Activated CD8-positive, alpha-beta T cell treated with anti-CD3 and anti-CD28 coated beads, Interleukin-2, amount 10 ng/mL, durations not matched to agents 7 days and 5 days (primary cell): ENCODE measurements at regions of chr7 and their contacts with region 1.

Region 1: GRCh38 chr7:92447345-92448204 is at the start of gene GATAD1:
- DNase-seq: peak; percentile 90
- ATAC-seq: peak; percentile 79
- H3K4me3 Mint-ChIP-seq: peak within 1 kb of the TSS; percentile 76
- H3K27ac Mint-ChIP-seq: peak within 1 kb of the TSS; percentile 93
- H3K4me1 Mint-ChIP-seq: peaks cover 7% of the 10 kb centered on the region
- H3K27me3 Mint-ChIP-seq: no peaks in the 10 kb centered on the region
- total RNA-seq, gene GATAD1: 11.4 to 12.4 TPM

Region 2: DNA sequence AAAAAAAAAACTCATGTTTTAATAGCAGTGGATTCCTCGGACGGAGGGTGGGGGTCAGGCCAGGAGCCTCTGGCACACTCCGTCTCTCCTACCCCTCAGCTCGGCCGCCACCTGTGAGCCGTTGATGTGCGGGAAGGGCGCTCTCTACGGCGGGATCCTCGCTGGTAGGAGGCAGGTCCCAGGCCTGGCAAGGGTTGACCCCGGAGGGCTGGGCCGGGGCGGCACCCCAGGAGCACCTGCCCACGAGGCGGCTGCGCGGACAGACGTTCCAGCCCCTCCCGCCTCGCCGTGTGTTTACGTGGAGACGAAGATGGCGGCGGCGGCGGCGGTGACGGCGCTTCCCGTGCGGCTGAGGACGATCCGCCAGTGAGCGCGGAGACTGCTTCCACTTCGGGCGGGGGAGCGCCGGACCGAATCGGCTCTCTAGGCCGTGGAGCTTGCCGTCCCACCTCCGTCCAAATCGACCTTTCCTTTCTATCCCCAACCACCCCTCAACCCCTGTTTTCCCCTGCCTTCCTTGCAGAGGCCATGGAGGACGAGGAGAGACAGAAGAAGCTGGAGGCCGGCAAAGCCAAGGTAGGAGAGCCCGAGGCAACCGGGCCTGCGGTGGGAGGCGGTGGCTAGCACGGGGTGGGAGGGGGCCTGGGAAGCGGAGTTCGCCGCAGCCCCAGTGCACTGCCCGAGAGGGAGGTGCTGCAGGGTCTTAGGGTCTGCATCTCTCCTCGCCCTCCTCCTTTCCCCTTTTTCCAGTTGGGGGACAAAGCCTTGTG is 506.8 kb before region 1 on chr7 and contains the start of gene AKAP9:
- CTCF ChIA-PET with region 1: interaction called, 13 read pairs
- POLR2A ChIA-PET with region 1: interaction called, 5 read pairs
- DNase-seq: peak; percentile 92
- ATAC-seq: peak; percentile 96
- H3K4me3 Mint-ChIP-seq: peak within 1 kb of the TSS; percentile 86
- H3K27ac Mint-ChIP-seq: peak within 1 kb of the TSS; percentile 95
- H3K4me1 Mint-ChIP-seq: peaks cover 22% of the 10 kb centered on the region
- H3K27me3 Mint-ChIP-seq: no peaks in the 10 kb centered on the region
- total RNA-seq, gene AKAP9: 32.7 to 41.5 TPM

Region 3: GRCh38 chr7:92178927-92179924 is 268.3 kb before region 1 on chr7 and contains the start of gene LRRD1:
- CTCF ChIA-PET with region 1: interaction called, 13 read pairs
- POLR2A ChIA-PET with region 1: interaction called, 8 read pairs
- DNase-seq: peak; percentile 92
- ATAC-seq: peak; percentile 100
- H3K4me3 Mint-ChIP-seq: peak within 1 kb of the TSS; percentile 75
- H3K27ac Mint-ChIP-seq: no peak within 1 kb of the TSS
- H3K4me1 Mint-ChIP-seq: peaks cover 9% of the 10 kb centered on the region
- H3K27me3 Mint-ChIP-seq: peaks cover 22% of the 10 kb centered on the region
- total RNA-seq, gene LRRD1: 0.13 TPM in 1 of 2 experiments, not detected in the other

Region 4: GRCh38 chr7:92421676-92422435 is 25.7 kb before region 1 on chr7:
- CTCF ChIA-PET with region 1: interaction called, 84 read pairs
- POLR2A ChIA-PET with region 1: interaction called, 23 read pairs
- DNase-seq: no peak
- ATAC-seq: no peak
- H3K4me3 Mint-ChIP-seq: no peak overlapping the region
- H3K27ac Mint-ChIP-seq: no peak overlapping the region
- H3K4me1 Mint-ChIP-seq: peaks cover 17% of the 10 kb centered on the region
- H3K27me3 Mint-ChIP-seq: peaks cover 15% of the 10 kb centered on the region

Region 5: DNA sequence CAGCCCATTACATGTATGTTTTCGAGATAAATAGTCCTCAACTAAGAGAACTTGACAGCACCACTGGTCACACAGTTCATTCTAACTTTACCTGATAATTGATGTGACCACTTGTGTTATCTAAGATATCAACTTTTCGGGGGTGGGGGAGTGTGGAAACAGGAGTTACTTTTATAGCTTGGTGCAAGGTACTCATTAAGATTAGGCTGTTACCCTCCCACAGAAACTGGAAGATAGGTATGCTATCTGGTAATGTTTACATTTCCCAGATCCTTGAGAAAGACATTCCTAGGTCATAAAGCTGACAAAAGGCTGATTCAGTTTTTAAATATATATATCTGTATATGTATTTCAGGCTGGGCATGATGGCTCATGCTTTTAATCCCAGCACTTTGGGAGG is 19.1 kb after region 1 on chr7:
- CTCF ChIA-PET with region 1: interaction called, 33 read pairs
- POLR2A ChIA-PET with region 1: interaction called, 3 read pairs
- DNase-seq: no peak
- ATAC-seq: no peak
- H3K4me3 Mint-ChIP-seq: no peak overlapping the region
- H3K27ac Mint-ChIP-seq: no peak overlapping the region
- H3K4me1 Mint-ChIP-seq: no peaks in the 10 kb centered on the region
- H3K27me3 Mint-ChIP-seq: no peaks in the 10 kb centered on the region